Activated CD8-positive, alpha-beta memory T cell treated with anti-CD3 and anti-CD28 coated beads, Interleukin-2, amount 10 ng/mL, durations not matched to agents 7 days and 5 days (primary cell): ENCODE measurements at regions of chr17 and their contacts with region 1.

Region 1: GRCh38 chr17:2054512-2055291 is at the start of gene HIC1:
- DNase-seq: peak; percentile 87
- ATAC-seq: peak; percentile 51
- H3K4me3 Mint-ChIP-seq: peak within 1 kb of the TSS; percentile 78
- H3K27ac Mint-ChIP-seq: peak within 1 kb of the TSS; percentile 86
- H3K4me1 Mint-ChIP-seq: peaks cover 26% of the 10 kb centered on the region
- H3K27me3 Mint-ChIP-seq: peaks cover 11% of the 10 kb centered on the region
- total RNA-seq, gene HIC1: 88.5 to 122 TPM

Region 2: GRCh38 chr17:2064980-2065785 is 10.5 kb after region 1 on chr17:
- CTCF ChIA-PET with region 1: interaction called, 88 read pairs
- DNase-seq: peak; percentile 94
- ATAC-seq: peak; percentile 67
- H3K4me3 Mint-ChIP-seq: peak overlapping the region; percentile 45
- H3K27ac Mint-ChIP-seq: peak overlapping the region; percentile 96
- H3K4me1 Mint-ChIP-seq: peaks cover 99% of the 10 kb centered on the region
- H3K27me3 Mint-ChIP-seq: no peaks in the 10 kb centered on the region

Region 3: DNA sequence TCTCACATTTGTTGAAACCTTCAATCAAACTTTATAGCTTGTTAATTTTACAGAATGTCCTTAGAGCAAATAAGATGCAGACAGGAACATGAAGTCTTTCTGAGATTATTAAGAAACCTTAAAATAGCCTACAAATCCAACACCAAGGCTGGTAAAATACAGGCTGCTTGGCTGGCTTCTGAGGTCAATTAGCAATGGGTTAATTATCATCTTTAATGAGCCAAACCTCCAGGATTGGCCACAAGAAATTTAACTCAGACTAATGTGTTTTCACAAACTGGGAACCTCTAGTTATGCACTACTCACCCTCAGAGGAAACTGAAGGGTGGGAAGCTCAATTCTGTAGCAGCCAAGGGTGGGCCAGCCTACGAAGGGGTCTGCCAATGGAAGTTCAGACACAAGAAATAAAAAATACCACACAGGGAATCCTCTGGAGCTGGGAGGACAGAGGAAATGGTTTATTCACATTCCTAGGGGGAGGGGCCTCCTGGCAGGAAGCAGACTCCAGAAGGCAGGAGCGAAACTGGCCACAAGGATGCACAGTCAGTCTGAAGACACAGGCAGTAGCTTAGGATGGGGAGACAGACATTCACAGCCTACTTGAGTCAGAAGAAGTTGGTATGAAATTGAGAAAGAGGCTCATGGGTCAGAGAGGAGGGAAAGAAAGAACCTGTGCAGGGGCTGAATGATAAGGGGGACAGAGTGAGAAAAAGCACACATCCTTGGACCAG is 36.3 kb after region 1 on chr17:
- CTCF ChIA-PET with region 1: interaction called, 96 read pairs
- DNase-seq: no peak
- ATAC-seq: no peak
- H3K4me3 Mint-ChIP-seq: peak overlapping the region; percentile 91
- H3K27ac Mint-ChIP-seq: peak overlapping the region; percentile 99
- H3K4me1 Mint-ChIP-seq: peaks cover 67% of the 10 kb centered on the region
- H3K27me3 Mint-ChIP-seq: no peaks in the 10 kb centered on the region

Region 4: GRCh38 chr17:2222901-2223616 is 168.4 kb after region 1 on chr17:
- CTCF ChIA-PET with region 1: interaction called, 13 read pairs
- DNase-seq: peak; percentile 87
- ATAC-seq: peak; percentile 88
- H3K4me3 Mint-ChIP-seq: peak overlapping the region; percentile 40
- H3K27ac Mint-ChIP-seq: peak overlapping the region; percentile 77
- H3K4me1 Mint-ChIP-seq: peaks cover 47% of the 10 kb centered on the region
- H3K27me3 Mint-ChIP-seq: no peaks in the 10 kb centered on the region

Region 5: GRCh38 chr17:2259769-2260536 is 205.3 kb after region 1 on chr17:
- CTCF ChIA-PET with region 1: interaction called, 401 read pairs
- DNase-seq: peak; percentile 94
- ATAC-seq: peak; percentile 83
- H3K4me3 Mint-ChIP-seq: peak overlapping the region; percentile 81
- H3K27ac Mint-ChIP-seq: peak overlapping the region; percentile 99
- H3K4me1 Mint-ChIP-seq: peaks cover 82% of the 10 kb centered on the region
- H3K27me3 Mint-ChIP-seq: no peaks in the 10 kb centered on the region

Region 6: DNA sequence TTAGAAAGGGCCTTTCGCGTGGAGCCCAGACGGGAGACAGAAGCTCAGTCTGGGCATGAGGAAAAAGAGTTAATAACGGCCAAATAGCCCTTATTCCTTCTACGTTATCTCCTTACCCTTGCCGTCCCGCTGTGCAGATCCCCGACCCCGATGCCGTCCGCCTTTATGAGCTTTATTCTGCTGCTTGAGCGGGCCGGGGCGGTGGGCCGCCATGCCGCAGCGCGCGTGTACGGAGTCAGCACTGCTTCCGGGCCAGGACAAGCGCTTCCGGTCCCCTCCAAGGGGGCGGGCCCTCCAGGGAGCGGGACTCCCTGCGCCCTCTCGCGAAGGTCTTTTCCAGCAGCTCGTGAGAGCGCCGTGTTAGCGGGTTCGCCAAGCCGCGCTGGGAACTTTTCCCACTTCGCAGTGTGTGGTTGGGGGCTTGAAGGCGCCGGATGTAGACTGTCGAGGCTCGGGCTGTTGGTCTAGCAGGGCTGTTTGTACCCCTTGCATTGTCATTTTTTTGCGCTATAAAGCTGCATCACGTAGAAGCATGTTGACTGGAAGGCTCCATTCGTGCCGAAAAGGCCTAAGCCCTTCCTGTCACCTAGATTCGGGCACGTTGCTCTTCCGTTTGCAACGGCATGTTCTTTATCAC is 281.6 kb after region 1 on chr17 and contains the start of gene TSR1:
- CTCF ChIA-PET with region 1: interaction called, 14 read pairs
- DNase-seq: peak; percentile 94
- ATAC-seq: peak; percentile 91
- H3K4me3 Mint-ChIP-seq: peak within 1 kb of the TSS; percentile 100
- H3K27ac Mint-ChIP-seq: peak within 1 kb of the TSS; percentile 93
- H3K4me1 Mint-ChIP-seq: peaks cover 21% of the 10 kb centered on the region
- H3K27me3 Mint-ChIP-seq: no peaks in the 10 kb centered on the region
- total RNA-seq, gene TSR1: 33.2 to 45.7 TPM